ENCODE measurements at regions of chr4 and their contacts with region 1.

Region 1: GRCh38 chr4:154429176-154429575 is 62.4 kb downstream of the DCHS2 start:
- DNase-seq: no peak
- ATAC-seq: no peak
- H3K4me3 ChIP-seq: no peak overlapping the region
- H3K27ac ChIP-seq: no peak overlapping the region
- H3K4me1 ChIP-seq: no peaks in the 10 kb centered on the region
- H3K27me3 ChIP-seq: no peaks in the 10 kb centered on the region
- CTCF ChIP-seq: no peak

Region 2: GRCh38 chr4:154277172-154277571 is 152.0 kb before region 1 on chr4:
- CTCF ChIA-PET with region 1: no interaction called
- POLR2A ChIA-PET with region 1: interaction called, 16 read pairs
- in situ Hi-C with region 1: no loop called
- intact Hi-C with region 1: no loop called
- DNase-seq: no peak
- ATAC-seq: no peak
- H3K4me3 ChIP-seq: no peak overlapping the region
- H3K27ac ChIP-seq: no peak overlapping the region
- H3K4me1 ChIP-seq: no peaks in the 10 kb centered on the region
- H3K27me3 ChIP-seq: no peaks in the 10 kb centered on the region
- CTCF ChIP-seq: no peak

Region 3: GRCh38 chr4:155408796-155409195 is 979.6 kb after region 1 on chr4:
- CTCF ChIA-PET with region 1: no interaction called
- POLR2A ChIA-PET with region 1: no interaction called
- in situ Hi-C with region 1: no loop called
- intact Hi-C with region 1: no loop called
- DNase-seq: no peak
- ATAC-seq: no peak
- H3K4me3 ChIP-seq: no peak overlapping the region
- H3K27ac ChIP-seq: no peak overlapping the region
- H3K4me1 ChIP-seq: no peaks in the 10 kb centered on the region
- H3K27me3 ChIP-seq: no peaks in the 10 kb centered on the region
- CTCF ChIP-seq: no peak